GM10248 (cell line): ENCODE measurements at regions of chr14 and their contacts with region 1.

Region 1: DNA sequence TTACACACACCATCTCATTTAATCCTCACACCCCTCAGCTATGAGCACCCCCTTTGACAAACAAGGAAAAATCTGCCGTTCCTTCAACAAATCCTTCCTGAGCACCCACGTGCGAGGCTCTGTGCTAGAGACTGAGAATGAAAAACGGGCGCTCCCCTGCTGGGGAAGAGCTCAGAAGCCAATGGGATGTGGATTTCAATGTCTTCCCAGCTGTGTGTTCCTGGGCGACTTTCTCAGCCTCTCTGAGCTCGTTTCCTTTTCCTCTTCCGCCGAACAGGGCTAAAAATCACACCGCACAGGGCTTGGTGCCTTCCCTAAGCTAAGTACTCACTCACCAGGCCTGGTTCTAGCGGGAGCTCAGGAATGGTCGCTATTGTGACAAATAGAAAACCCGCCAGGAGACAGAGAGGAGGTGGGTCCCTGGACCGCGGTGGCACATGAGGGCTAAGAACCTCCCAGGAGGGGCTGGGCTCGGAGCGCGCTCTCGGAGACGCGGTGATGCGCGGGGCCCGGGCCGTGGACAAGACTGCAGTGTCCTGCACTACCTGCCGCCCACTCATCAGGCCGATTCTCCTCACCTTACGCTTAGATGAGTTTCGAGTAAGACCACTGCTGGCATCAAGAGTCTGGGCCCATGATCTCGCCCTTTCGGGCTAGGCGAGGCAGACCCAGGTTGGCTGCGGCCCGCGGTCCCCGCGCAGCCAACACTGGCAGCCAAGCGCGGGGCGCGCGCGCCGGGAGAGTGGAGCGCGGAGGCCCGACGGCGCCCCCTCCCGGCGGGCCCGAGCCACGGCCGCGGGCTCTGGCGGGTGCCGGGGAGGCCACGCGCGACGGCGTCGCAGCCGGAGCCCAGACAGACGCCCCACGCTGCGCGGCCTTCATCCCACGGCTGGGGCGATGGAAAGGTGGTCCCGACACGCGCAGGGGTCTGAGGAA is 17.0 kb downstream of the ZDHHC22 start:
- DNase-seq: peak; percentile 79
- CTCF ChIP-seq: peak; percentile 89

Region 2: DNA sequence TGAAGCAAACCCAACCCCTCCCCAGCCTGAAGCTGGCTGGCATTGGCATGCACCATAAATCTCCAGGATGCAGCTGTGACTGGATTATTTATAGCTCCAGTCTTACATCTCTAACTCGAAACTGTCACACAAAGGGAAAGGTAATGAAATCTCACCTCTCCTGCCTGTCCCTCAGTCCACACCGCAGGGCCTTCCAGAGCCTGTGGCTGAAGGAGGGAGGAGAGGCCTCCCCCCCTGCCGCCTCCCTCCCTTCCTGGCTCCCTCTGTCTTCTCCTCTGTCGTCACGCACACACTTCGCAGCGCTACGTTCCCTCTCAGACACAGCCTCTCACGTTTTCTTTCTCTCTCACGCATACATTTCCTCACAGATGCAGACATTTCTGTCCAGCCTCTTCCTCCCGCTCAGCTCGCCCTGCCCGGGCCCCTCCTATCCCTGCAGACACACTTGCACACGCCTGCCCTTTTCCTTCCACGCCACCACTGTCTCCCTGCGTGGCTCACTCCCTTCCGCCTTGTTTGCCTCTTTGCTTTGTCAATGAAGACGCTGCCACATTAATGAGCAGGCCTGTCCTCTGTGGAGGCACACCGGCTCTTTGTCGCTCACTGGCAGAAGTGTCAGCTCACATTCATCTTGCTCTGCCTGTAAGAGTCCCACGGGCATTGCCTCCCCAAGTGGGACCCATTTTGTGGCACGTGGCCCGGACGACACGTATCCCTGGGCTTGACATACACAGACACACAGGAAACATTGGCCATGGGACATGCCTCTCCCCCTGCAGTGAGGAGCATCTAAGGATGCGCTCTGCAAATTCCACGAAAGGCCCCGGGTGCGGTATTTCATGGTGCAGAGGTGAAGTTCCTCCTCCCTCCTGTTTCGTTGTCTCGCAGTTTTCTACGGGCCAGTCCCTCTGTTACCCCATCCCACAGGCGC is 124.0 kb before region 1 on chr14:
- CTCF ChIA-PET with region 1: no interaction called
- POLR2A ChIA-PET with region 1: no interaction called
- DNase-seq: no peak
- CTCF ChIP-seq: no peak

Region 3: GRCh38 chr14:77086017-77086736 is 38.4 kb before region 1 on chr14:
- CTCF ChIA-PET with region 1: interaction called, 16 read pairs
- POLR2A ChIA-PET with region 1: interaction called, 3 read pairs
- DNase-seq: peak; percentile 46
- CTCF ChIP-seq: no peak

Region 4: GRCh38 chr14:77111043-77111442 is 13.6 kb before region 1 on chr14:
- CTCF ChIA-PET with region 1: interaction called, 43 read pairs
- POLR2A ChIA-PET with region 1: interaction called, 3 read pairs
- DNase-seq: no peak
- CTCF ChIP-seq: no peak

Region 5: GRCh38 chr14:77141214-77142004 is 16.8 kb after region 1 on chr14 and contains the start of gene ZDHHC22:
- CTCF ChIA-PET with region 1: interaction called, 51 read pairs
- POLR2A ChIA-PET with region 1: no interaction called
- DNase-seq: no peak
- CTCF ChIP-seq: no peak

Region 6: GRCh38 chr14:77219591-77219990 is 95.0 kb after region 1 on chr14:
- CTCF ChIA-PET with region 1: no interaction called
- POLR2A ChIA-PET with region 1: no interaction called
- DNase-seq: no peak
- CTCF ChIP-seq: no peak